Common myeloid progenitor, CD34-positive (primary cell): ENCODE measurements at regions of chr20 and their contacts with region 1.

Region 1: DNA sequence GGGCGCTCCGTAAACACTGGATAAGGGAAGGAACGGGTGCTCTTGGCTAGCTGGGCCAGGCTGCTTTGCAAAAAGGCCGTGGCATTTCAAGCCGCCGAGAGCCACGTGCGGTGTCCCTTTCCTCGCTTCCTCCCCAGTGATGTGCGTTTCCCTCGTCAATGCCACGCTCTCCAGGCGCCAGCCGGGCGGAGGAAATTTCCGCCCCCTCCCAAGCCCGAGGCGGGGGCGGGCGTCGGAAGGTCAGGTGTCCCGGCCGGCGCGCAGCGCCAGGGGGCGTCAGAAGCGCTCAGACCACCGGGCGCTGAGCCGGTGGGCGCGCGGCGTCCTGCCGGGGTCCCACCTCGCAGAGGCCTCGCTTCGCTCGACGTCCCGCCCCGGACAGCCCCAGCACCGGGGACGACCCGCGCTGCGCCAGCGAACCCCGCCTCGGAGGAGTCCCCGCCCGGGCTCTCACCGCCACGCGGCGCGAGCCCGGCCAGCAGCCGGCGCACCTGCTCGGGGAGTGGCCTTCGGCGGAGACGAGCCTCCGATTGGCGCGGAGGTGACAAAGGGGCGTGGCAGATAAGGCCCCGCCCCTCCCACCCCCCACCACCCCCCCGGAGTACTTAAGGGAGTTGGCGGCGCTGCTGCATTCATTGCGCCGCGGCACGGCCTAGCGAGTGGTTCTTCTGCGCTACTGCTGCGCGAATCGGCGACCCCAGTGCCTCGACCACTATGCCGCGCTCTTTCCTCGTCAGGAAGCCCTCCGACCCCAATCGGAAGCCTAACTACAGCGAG is at the start of gene SNAI1:
- DNase-seq: peak; percentile 83 to 93 (median 92)
- H3K4me3 ChIP-seq: peak within 1 kb of the TSS in 6 of 7 experiments; percentile 42 to 73 (median 61)
- H3K27ac ChIP-seq: peak within 1 kb of the TSS in 1 of 2 experiments; percentile 78
- H3K4me1 ChIP-seq: peaks cover 0 to 70% (median 35%) of the 10 kb centered on the region in 4 experiments
- H3K27me3 ChIP-seq: no peaks in the 10 kb centered on the region

Region 2: DNA sequence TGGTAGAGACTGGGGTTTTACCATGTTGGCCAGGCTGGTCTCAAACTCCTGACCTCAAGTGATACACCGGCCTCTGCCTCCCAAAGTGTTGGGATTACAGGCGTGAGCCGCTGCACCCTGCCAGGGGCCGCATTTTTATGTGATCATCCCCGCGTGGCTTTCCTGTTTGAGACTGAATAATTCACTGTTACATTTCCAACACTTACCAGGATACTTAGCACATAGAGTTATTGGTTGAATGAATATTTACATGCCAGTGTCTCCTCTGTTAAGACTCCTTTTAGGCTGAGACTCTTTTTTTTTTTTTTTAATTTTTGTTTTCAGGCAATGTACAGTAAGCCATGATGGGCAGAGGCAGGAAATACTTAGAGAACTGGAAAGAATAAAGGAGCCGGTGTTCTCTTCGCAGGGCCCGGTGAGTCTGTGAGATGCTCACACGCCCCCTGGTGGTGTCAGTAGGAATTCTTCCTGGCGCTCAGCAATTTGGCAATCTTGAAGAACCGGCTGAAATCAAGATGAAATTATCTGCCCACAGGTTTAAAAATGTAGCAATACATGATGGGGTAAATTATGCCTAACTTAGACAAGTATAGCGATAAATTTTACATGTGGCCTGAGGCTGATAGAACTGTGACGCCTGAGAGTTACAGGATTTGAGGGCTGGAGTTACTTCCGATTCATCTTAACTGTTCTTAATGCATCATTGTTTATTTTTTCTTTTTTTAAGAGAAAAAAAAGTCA is 54.0 kb before region 1 on chr20:
- CTCF ChIA-PET with region 1: no interaction called
- POLR2A ChIA-PET with region 1: no interaction called
- DNase-seq: peak; percentile 86 to 93 (median 91)
- H3K4me3 ChIP-seq: peak overlapping the region in 2 of 7 experiments; percentile 12 to 19
- H3K27ac ChIP-seq: no peak overlapping the region
- H3K4me1 ChIP-seq: peaks cover 0 to 3% (median 2%) of the 10 kb centered on the region in 4 experiments
- H3K27me3 ChIP-seq: no peaks in the 10 kb centered on the region

Region 3: DNA sequence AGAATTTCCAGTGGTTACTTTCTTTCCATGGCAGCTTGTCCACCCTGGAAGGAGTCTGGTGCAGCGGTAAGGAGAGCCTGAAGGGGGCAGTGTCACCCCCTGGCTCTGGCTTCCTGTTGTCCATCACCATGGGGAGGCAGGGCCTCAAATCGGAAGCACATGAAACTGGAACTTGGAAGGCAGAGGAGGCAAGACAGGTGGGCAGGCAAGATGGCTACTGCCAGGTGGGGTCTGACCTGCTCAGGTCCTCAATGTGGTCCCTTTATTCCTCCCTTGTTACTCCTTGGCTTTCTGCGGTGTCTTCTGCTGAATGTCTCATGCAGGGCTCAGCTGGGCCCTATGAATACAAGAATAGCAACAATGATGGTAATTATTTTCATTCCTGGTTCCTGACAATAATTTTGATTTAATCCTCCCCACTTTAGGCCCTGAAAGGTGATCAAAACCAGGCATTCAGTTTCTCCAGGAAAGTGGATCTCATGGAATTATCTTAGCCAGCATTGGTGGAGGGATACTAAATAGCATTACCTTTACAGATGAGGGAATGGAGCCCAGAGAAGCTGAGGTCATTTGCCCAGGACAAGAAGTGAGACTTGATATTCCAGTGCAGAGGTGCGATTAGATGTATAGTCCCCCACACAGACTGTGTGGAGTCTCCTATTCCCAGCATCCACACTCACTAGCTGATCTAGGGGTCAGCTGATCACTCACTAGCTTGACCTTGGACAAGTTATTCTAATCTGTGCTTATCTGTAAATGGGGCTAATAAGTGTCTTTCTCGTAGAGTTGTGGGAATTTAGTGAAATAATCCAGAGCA is 17.4 kb before region 1 on chr20:
- CTCF ChIA-PET with region 1: interaction called, 13 read pairs
- POLR2A ChIA-PET with region 1: no interaction called
- DNase-seq: peak in 2 of 3 donors; percentile 20 to 34
- H3K4me3 ChIP-seq: no peak overlapping the region
- H3K27ac ChIP-seq: no peak overlapping the region
- H3K4me1 ChIP-seq: no peaks in the 10 kb centered on the region
- H3K27me3 ChIP-seq: no peaks in the 10 kb centered on the region